Ascending aorta (tissue), 2 donors: ENCODE measurements at regions of chr13 and their contacts with region 1.

Region 1: DNA sequence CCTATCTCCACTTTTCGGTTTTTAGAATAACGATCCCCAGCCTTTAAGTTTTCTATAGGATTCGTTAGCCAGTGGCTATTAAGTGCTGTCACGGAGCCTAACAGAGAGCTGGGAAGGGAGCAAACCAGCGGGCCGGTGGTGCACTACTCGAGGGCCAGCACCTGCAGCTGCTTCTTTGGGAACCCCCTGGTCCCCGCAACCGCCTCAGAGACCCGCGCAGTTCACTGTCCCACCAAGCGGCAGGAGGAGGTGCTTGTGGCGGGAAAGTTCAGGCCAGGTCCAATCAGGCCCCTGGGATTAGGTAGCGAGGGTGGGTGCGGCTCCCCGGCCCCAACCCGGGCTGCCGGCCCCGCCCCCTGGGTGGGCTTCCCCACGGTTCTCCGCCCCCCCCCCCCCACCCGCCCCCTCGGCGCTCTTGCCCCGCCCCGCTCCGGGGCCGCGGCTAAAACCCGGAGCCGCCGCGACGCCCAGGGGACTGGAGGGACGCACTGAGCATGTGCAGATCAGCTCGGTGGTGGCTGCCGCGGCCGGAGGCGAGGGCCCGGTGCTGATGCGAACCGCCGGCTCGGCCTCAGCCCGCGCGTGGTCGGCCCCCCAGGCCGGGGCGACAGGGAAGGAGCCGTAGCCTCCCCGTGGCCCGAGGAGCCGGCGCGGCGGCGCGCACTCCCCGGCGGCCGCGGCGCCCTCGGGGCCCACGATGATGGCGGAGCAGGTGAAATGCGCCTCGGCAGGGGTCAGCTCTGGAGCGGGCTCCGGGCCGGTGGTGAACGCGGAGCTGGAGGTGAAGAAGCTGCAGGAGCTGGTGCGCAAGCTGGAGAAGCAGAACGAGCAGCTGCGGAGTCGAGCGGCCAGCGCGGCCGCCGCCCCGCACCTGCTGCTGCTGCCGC is at the start of gene SLAIN1:
- DNase-seq: peak; percentile 38 to 90
- H3K4me3 ChIP-seq: peak within 1 kb of the TSS; percentile 90 to 99
- H3K27ac ChIP-seq: peak within 1 kb of the TSS; percentile 74 to 80
- H3K4me1 ChIP-seq: peaks cover 0 to 8% of the 10 kb centered on the region in 2 donors
- H3K27me3 ChIP-seq: no peaks in the 10 kb centered on the region
- CTCF ChIP-seq: no peak
- total RNA-seq, gene SLAIN1: 7.1 TPM

Region 2: GRCh38 chr13:77737583-77738200 is 40.2 kb after region 1 on chr13:
- intact Hi-C with region 1: no loop called
- DNase-seq: no peak
- H3K4me3 ChIP-seq: no peak overlapping the region
- H3K27ac ChIP-seq: no peak overlapping the region
- H3K4me1 ChIP-seq: peaks cover 0 to 6% of the 10 kb centered on the region in 2 donors
- H3K27me3 ChIP-seq: no peaks in the 10 kb centered on the region
- CTCF ChIP-seq: no peak

Region 3: GRCh38 chr13:78658635-78659449 is 961.4 kb after region 1 on chr13 and contains the start of gene OBI1:
- intact Hi-C with region 1: loop called (anchors 10 kb)
- DNase-seq: peak; percentile 59 to 95
- H3K4me3 ChIP-seq: peak within 1 kb of the TSS; percentile 94 to 96
- H3K27ac ChIP-seq: peak within 1 kb of the TSS; percentile 59 to 62
- H3K4me1 ChIP-seq: peaks cover 3 to 12% of the 10 kb centered on the region in 2 donors
- H3K27me3 ChIP-seq: no peaks in the 10 kb centered on the region
- CTCF ChIP-seq: no peak
- total RNA-seq, gene OBI1: 1.8 TPM